ENCODE measurements at regions of chr12 and their contacts with region 1.

Region 1: GRCh38 chr12:46896680-46897079 is 70.9 kb upstream of the SLC38A4 start:
- DNase-seq: no peak
- H3K4me3 ChIP-seq: no peak overlapping the region
- H3K27ac ChIP-seq: no peak overlapping the region
- H3K4me1 ChIP-seq: no peaks in the 10 kb centered on the region
- H3K27me3 ChIP-seq: no peaks in the 10 kb centered on the region
- CTCF ChIP-seq: no peak

Region 2: DNA sequence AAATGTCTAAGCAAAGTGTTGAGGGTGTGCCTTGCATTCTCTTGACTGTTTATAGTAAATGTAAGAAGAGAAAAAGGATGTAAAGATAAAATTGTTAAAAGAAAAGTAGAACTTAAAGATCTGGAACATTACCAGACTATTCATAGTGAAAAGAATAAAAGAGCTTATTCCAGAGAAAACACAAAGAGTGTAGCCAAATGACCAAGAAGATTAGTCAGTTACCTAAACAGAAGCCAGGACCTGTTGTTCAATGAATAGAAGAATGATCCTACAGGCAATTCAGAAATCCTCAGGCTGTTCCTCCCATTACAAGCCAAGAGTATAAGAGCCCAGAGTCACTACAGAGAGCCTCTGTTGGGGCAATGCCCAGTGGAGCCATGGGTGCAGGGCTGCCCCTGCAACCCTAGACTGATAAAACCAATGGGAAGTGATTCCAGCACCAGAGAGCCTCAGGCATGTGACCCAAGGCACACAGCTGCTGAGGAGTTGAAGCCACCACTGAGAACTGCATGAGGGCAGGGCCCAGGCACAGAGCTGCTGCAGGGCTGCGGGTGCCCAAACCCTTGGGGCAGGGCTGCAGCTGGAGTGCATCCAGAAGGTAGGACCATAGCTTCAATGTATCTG is 20.2 kb after region 1 on chr12:
- intact Hi-C with region 1: loop called (anchors 1 kb)
- DNase-seq: no peak
- H3K4me3 ChIP-seq: no peak overlapping the region
- H3K27ac ChIP-seq: no peak overlapping the region
- H3K4me1 ChIP-seq: no peaks in the 10 kb centered on the region
- H3K27me3 ChIP-seq: no peaks in the 10 kb centered on the region
- CTCF ChIP-seq: no peak

Region 3: DNA sequence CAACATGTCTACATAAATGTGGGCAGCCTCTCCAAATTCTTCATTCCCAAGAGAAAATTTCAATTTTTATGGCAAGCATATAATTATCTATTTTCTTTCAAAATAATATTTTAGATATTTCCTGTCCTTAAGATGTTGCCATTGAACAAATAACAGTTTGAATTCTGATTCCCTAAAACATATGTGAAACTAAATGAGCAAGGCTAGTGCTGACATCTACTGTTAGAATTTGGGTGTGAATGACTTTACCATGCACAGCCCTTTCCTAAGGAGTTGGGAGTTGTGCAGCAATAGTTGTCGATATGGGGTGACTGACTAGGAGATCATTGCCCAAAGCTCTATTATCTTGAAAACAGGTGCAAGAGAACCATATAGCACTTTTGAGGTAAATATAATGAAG is 37.3 kb after region 1 on chr12:
- intact Hi-C with region 1: no loop called
- DNase-seq: no peak
- H3K4me3 ChIP-seq: no peak overlapping the region
- H3K27ac ChIP-seq: no peak overlapping the region
- H3K4me1 ChIP-seq: no peaks in the 10 kb centered on the region
- H3K27me3 ChIP-seq: no peaks in the 10 kb centered on the region
- CTCF ChIP-seq: peak; percentile 26 to 61 (median 37)

Region 4: GRCh38 chr12:47032644-47033043 is 136.0 kb after region 1 on chr12:
- intact Hi-C with region 1: no loop called
- DNase-seq: no peak
- H3K4me3 ChIP-seq: no peak overlapping the region
- H3K27ac ChIP-seq: no peak overlapping the region
- H3K4me1 ChIP-seq: peaks cover 0 to 5% of the 10 kb centered on the region in 2 donors
- H3K27me3 ChIP-seq: no peaks in the 10 kb centered on the region
- CTCF ChIP-seq: peak; percentile 52 to 69 (median 64)